ENCODE measurements at regions of chr6 and their contacts with region 1.

Region 1: DNA sequence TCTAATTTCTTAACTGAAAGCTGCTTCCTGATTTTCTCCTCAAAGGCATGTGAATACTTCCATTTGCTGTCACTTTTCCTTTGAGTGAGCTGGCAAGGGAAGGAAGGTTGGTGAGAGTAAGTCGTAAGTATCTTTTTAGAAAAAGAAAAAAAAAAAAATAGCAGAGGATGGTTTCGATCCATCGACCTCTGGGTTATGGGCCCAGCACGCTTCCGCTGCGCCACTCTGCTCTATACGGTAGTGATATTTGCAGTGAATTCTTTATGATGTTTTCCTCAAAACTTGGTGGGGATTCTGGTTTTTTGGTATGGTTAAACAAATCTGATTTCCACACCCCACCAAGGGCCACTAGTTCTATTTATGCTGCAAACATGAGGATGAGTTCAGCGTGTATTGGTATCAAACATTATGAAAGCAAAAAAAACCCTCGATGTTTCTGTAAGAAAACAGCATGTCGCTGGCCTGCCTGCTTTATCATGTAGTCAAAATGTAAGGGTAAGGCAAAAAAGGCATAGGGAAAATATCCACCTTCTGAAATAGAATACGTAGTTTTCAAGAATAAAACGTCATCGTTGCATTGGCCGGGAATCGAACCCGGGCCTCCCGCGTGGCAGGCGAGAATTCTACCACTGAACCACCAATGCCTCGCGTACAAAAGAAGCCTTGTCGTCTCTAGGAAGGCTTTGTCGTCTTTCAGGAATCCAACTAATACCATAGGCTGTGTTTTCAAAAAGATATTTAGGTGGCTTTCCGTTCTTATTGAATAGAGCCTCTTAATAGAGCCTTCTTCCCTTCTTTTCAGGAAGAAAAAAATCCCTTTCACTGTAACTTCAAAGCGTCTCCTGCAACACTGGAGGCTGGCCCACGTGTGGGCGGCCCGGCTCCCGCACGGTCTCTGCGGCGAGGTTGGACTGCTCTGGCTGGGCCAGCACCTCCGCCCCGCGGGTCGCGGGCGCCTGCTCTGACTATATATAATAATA is 9.6 kb downstream of the OR2B2 start:
- DNase-seq: peak; percentile 77
- H3K4me3 Mint-ChIP-seq: peak overlapping the region; percentile 79
- H3K27ac Mint-ChIP-seq: peak overlapping the region; percentile 95
- H3K4me1 Mint-ChIP-seq: peaks cover 24% of the 10 kb centered on the region
- H3K27me3 Mint-ChIP-seq: peaks cover 26% of the 10 kb centered on the region

Region 2: GRCh38 chr6:27503436-27504030 is 399.1 kb before region 1 on chr6:
- intact Hi-C with region 1: loop called (anchors 2 kb)
- DNase-seq: peak; percentile 60
- H3K4me3 Mint-ChIP-seq: peak overlapping the region; percentile 90
- H3K27ac Mint-ChIP-seq: peak overlapping the region; percentile 82
- H3K4me1 Mint-ChIP-seq: peaks cover 32% of the 10 kb centered on the region
- H3K27me3 Mint-ChIP-seq: peaks cover 42% of the 10 kb centered on the region

Region 3: GRCh38 chr6:27687154-27688013 is 215.2 kb before region 1 on chr6:
- intact Hi-C with region 1: loop called (anchors 2 kb)
- DNase-seq: peak; percentile 74
- H3K4me3 Mint-ChIP-seq: peak overlapping the region; percentile 88
- H3K27ac Mint-ChIP-seq: peak overlapping the region; percentile 91
- H3K4me1 Mint-ChIP-seq: peaks cover 26% of the 10 kb centered on the region
- H3K27me3 Mint-ChIP-seq: peaks cover 24% of the 10 kb centered on the region

Region 4: GRCh38 chr6:28136585-28137504 is 234.2 kb after region 1 on chr6:
- intact Hi-C with region 1: loop called (anchors 5 kb)
- DNase-seq: peak; percentile 65
- H3K4me3 Mint-ChIP-seq: peak overlapping the region; percentile 95
- H3K27ac Mint-ChIP-seq: peak overlapping the region; percentile 91
- H3K4me1 Mint-ChIP-seq: peaks cover 78% of the 10 kb centered on the region
- H3K27me3 Mint-ChIP-seq: no peaks in the 10 kb centered on the region

Region 5: DNA sequence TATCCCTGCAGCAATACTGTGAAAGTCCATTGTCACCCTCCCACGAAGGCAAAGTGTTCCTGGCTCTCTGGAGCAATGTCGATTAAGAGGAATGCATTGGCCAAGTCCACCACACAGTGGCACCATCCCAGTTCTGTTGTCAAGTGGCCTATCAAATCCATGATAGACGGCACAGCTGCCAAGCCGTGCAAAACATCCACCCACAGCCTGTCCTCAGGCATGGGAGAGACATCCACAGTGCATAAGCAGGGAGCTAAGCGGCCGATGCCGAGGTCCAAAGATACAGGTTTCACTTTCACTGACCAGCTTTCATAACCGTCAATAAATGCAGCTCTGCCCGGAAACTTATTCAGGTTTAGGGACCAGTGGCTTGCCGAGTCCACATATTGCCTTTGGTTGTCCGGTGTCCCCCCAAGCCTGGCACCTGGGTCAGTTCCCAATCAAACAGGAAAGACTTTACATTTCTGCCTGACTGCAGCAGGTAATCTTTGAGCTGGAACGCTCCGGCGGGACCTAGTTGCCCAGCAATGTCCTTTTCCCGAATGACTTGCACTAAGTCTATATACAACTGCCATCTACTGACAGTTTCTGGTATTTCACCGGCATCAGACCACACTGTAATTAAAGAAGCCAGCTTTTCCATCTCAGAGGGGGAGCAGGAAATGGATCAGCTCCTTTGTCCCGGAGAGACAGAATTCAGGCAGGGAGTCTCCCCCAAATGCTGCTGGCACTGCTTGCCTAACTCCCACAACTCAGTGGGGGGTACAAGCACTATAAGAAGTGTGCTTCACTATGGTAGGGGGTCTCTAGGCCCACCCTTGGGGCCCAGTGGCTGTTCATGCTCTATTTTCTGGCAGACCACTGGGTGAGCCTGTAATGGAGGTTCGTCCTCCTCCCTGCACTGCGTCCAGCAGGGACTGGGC is 453.4 kb after region 1 on chr6:
- intact Hi-C with region 1: loop called (anchors 2 kb)
- DNase-seq: peak; percentile 48
- H3K4me3 Mint-ChIP-seq: peak overlapping the region; percentile 86
- H3K27ac Mint-ChIP-seq: peak overlapping the region; percentile 72
- H3K4me1 Mint-ChIP-seq: peaks cover 25% of the 10 kb centered on the region
- H3K27me3 Mint-ChIP-seq: no peaks in the 10 kb centered on the region

Region 6: GRCh38 chr6:28838634-28839442 is 936.2 kb after region 1 on chr6:
- intact Hi-C with region 1: loop called (anchors 2 kb)
- DNase-seq: peak; percentile 76
- H3K4me3 Mint-ChIP-seq: peak overlapping the region; percentile 96
- H3K27ac Mint-ChIP-seq: peak overlapping the region; percentile 93
- H3K4me1 Mint-ChIP-seq: peaks cover 19% of the 10 kb centered on the region
- H3K27me3 Mint-ChIP-seq: peaks cover 47% of the 10 kb centered on the region

Region 7: DNA sequence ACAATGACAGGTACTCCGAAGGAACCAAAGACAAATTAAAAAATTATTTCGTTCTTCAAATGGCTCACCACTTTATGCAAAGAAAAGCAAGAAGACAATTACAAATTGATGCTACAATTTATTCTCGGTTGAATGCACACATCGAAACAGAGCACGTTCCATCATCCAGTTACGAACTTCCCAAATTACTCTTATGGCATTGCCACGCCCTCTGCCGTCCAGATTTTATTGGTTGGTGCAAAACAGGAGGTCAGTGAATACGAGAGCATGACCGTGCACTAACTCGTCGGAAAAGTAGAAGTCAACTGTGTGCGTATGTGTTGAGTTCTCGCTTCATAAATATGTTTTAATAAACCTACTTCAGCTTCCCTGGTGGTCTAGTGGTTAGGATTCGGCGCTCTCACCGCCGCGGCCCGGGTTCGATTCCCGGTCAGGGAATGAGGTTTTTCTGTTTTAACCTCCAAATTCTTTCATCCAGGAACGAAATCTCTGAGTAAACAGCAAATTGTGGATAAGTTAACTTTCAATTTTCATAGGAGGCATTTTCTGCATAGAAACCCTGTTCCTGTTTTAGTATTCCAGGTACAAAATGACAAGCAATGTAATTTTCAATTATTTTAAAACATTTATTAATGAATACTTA is 1079.3 kb after region 1 on chr6:
- intact Hi-C with region 1: loop called (anchors 5 kb)
- DNase-seq: peak; percentile 59
- H3K4me3 Mint-ChIP-seq: peak overlapping the region; percentile 90
- H3K27ac Mint-ChIP-seq: peak overlapping the region; percentile 95
- H3K4me1 Mint-ChIP-seq: peaks cover 59% of the 10 kb centered on the region
- H3K27me3 Mint-ChIP-seq: peaks cover 22% of the 10 kb centered on the region

Measured in activated T-helper 1 cell treated with anti-CD3 and anti-CD28 coated beads, Interleukin-12 subunit alpha, Interleukin-12 subunit beta, Interleukin-2, Interleukin-4 antibody, amounts not matched to agents 30 ng/mL and 10 ng/mL and 1 ng/mL, durations not matched to agents 14 hours and 24 hours and 36 hours (primary cell).